PC-9 (cell line): ENCODE measurements at regions of chr4 and their contacts with region 1.

Region 1: GRCh38 chr4:122930862-122931261 is 8.5 kb upstream of the NUDT6 start:
- DNase-seq: no peak
- H3K4me3 ChIP-seq: no peak overlapping the region
- H3K27ac ChIP-seq: no peak overlapping the region
- H3K4me1 ChIP-seq: no peaks in the 10 kb centered on the region
- H3K27me3 ChIP-seq: no peaks in the 10 kb centered on the region
- CTCF ChIP-seq: peak; percentile 85

Region 2: DNA sequence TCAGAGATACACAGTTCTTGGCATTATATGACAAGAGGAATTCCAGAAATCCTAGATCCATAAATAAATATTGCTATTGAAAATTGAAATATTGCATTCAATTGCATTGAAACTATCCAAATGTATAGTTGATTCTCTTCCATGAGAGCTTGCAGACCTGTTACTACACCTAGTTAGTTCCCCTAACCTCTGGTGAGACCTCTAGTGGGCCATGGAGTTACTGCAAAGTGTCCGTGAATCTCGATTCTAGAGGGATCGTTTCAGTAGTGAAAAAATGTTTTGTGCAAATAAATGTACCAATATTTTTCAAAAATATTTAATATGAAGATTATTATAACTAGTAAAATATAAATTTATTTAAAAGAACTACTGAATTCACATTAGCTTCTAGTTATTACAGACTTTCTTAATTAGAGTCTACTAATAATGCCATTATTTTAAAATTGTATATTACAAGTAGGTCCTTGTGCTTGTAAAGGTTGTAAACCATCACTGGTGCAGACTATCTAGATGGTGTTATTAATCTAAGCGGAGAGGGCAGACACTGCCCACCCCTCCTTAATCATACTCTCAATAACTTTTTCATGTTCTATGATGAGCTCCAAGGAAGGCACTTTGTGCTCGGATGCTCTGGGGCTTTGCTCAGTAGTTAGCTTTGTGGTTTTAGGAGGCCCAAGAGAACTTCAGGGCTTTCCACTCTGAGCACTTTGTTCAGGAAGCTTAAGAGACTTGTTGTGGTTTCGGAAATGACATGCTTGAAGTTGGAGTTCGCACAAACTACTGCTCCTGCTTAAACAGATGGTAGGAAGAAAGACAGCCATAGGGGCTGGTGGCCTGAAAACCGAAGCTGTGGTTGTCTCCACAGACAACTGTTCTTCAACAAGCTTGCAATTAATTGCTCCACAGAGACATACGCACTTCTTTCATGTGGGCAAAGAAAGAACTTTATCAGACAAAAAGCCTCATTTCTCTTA is 352.8 kb before region 1 on chr4:
- CTCF ChIA-PET with region 1: interaction called, 6 read pairs
- POLR2A ChIA-PET with region 1: no interaction called
- intact Hi-C with region 1: loop called (anchors 10 kb)
- DNase-seq: peak in 1 of 2 experiments; percentile 30
- H3K4me3 ChIP-seq: no peak overlapping the region
- H3K27ac ChIP-seq: no peak overlapping the region
- H3K4me1 ChIP-seq: no peaks in the 10 kb centered on the region
- H3K27me3 ChIP-seq: no peaks in the 10 kb centered on the region
- CTCF ChIP-seq: peak; percentile 78

Region 3: DNA sequence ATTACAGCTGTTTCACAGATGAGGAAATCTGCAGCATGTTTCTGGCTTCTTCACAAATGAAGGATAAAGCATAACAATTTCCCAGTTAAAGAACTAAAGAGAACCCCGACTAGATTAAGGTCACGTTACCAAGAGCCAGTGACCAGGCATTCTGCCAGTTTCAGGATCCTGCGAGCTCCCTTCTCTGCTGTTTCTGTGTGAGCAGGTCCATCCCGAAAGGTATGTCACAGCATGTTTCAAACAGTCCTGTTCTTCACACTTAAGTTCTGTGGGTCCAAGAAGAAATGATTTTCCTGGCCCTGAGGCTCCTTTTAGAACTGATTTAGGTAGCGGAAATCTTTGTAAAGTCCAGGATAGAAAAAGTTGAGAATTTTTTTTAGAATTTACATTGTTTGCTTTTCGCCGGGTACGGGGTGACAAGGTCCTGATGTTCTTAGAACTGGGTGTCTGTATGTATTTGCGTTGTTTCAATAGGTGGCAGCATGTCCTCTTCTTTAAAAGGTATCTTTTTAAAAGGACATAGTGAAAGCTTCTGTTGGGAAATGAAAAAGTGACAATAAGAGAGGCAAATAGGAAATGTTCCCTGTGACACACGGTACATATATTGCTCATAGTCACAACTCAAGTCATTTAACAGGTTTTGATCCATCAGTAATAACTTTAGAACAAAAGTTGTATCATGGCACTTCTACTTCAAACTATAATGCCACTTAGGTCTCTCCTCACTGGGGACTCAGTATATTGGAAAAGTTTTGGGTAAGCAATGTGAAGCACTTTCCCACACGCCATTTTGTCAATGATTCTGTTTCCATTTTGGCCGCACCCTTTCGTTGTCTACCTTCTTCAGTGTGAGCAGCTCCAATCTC is 328.4 kb before region 1 on chr4:
- CTCF ChIA-PET with region 1: interaction called, 5 read pairs
- POLR2A ChIA-PET with region 1: no interaction called
- intact Hi-C with region 1: loop called (anchors 2 kb)
- DNase-seq: peak in 1 of 2 experiments; percentile 6
- H3K4me3 ChIP-seq: no peak overlapping the region
- H3K27ac ChIP-seq: no peak overlapping the region
- H3K4me1 ChIP-seq: no peaks in the 10 kb centered on the region
- H3K27me3 ChIP-seq: 0 out of 2 replicates have a peak, but pooled peaks cover 6% of the 10 kb centered on the region
- CTCF ChIP-seq: peak; percentile 64

Region 4: GRCh38 chr4:124810827-124811226 is 1880.0 kb after region 1 on chr4:
- CTCF ChIA-PET with region 1: no interaction called
- POLR2A ChIA-PET with region 1: no interaction called
- intact Hi-C with region 1: no loop called
- DNase-seq: no peak
- H3K4me3 ChIP-seq: no peak overlapping the region
- H3K27ac ChIP-seq: no peak overlapping the region
- H3K4me1 ChIP-seq: no peaks in the 10 kb centered on the region
- H3K27me3 ChIP-seq: no peaks in the 10 kb centered on the region
- CTCF ChIP-seq: no peak